Ovary (tissue), 10 donors: ENCODE measurements at regions of chr16 and their contacts with region 1.

Region 1: GRCh38 chr16:51875834-51876600 is 670.9 kb downstream of the TOX3 start:
- DNase-seq: no peak
- H3K4me3 ChIP-seq: no peak overlapping the region
- H3K27ac ChIP-seq: no peak overlapping the region
- H3K4me1 ChIP-seq: no peaks in the 10 kb centered on the region
- H3K27me3 ChIP-seq: no peaks in the 10 kb centered on the region
- CTCF ChIP-seq: no peak
- EP300 ChIP-seq: no peak
- POLR2A ChIP-seq: no peak

Region 2: DNA sequence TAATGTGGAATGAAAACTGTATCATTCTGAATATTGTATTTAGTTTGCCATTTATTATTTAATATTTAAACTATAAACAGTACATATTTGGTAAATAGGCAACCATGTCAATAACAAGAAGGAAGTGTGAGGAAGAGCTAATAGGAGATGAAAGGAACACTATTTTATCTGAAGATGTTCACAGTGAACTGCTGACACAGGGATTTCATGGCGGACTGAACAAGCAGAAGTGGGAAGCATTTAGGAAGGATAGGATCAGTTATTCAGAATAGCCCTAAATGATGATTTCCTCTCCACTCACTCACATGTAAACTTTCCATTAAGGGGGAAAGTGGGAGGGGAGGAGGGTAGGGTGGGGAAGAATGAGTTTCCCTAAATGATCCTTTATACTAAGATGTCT is 11.4 kb before region 1 on chr16:
- intact Hi-C with region 1: loop called in 1 of 4 experiments (anchors 1 kb)
- DNase-seq: no peak
- H3K4me3 ChIP-seq: no peak overlapping the region
- H3K27ac ChIP-seq: no peak overlapping the region
- H3K4me1 ChIP-seq: no peaks in the 10 kb centered on the region
- H3K27me3 ChIP-seq: no peaks in the 10 kb centered on the region
- CTCF ChIP-seq: no peak
- EP300 ChIP-seq: no peak
- POLR2A ChIP-seq: no peak